Activated CD4-positive, alpha-beta memory T cell treated with anti-CD3 and anti-CD28 coated beads for 36 hours (primary cell): ENCODE measurements at regions of chr18 and their contacts with region 1.

Region 1: DNA sequence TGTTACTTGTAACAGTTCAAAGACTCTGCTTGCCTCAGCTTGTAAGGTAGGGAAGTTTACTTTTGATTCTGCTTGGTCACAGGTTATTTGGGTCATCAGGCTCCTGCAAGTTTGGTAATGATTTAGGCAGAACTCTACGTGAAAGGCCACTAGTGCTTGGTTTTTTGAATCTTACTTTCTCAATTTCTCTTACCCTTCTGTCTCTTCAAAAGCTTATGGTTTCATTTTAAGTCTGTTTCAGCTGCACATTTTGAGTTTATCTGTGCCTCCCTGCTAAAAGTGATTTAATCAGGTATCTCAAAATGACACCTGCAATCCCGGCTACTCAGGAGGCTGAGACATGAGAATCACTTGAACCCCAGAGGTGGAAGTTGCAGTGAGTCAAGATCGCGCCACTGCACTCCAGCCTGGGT is 26.3 kb upstream of the MOCOS start:
- DNase-seq: peak; percentile 52
- H3K4me3 Mint-ChIP-seq: no peak overlapping the region
- H3K27ac Mint-ChIP-seq: peak overlapping the region; percentile 70
- H3K4me1 Mint-ChIP-seq: peaks cover 34% of the 10 kb centered on the region
- H3K27me3 Mint-ChIP-seq: no peaks in the 10 kb centered on the region

Region 2: GRCh38 chr18:36142751-36143150 is 18.2 kb before region 1 on chr18:
- CTCF ChIA-PET with region 1: no interaction called
- POLR2A ChIA-PET with region 1: no interaction called
- intact Hi-C with region 1: loop called (anchors 2 kb)
- DNase-seq: no peak
- H3K4me3 Mint-ChIP-seq: no peak overlapping the region
- H3K27ac Mint-ChIP-seq: no peak overlapping the region
- H3K4me1 Mint-ChIP-seq: peaks cover 5% of the 10 kb centered on the region
- H3K27me3 Mint-ChIP-seq: no peaks in the 10 kb centered on the region